Activated CD4-positive, alpha-beta T cell treated with anti-CD3 and anti-CD28 coated beads for 36 hours (primary cell): ENCODE measurements at regions of chr15 and their contacts with region 1.

Region 1: DNA sequence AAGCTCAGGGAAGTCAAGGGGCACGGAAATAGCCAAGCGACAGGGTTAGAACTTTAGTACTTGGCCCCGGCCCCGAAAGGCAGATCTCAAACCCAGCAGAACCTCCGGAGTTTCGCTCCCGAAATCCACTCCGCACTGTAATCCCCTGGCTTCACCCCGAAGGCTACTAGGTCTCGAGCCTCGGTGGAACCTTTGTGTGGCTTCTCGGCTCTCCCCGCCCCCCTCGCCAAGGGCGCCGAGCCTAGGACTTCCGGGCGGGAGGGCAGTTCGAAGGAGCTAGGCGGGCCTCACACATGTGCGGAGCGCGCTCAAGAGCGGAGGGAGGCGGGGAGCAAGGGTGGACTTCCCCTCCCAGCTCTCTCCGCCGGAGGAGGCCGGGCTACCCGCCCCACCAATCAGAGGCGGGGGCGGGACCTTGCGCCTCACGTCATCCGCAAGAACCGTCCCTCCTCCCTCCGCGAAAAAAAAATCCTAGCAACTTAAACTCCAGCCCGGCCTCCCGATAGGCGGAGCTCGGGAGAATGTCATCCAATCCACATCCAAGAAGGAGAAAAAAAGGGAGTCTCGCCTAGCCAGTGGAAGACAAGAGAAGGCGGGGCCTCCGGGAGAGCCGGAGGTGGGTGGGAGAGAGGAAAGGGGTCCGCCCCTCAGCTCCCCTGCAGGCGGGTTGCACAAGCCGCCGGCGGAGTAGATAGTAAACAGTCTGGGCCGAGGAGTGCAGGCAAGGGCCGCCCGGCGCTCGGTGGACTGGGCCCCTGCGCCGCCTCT is 2.4 kb upstream of the SIN3A start:
- DNase-seq: peak; percentile 98
- ATAC-seq: peak; percentile 40
- H3K4me3 Mint-ChIP-seq: peak overlapping the region; percentile 99
- H3K27ac Mint-ChIP-seq: peak overlapping the region; percentile 96
- H3K4me1 Mint-ChIP-seq: peaks cover 18% of the 10 kb centered on the region
- H3K27me3 Mint-ChIP-seq: no peaks in the 10 kb centered on the region

Region 2: GRCh38 chr15:74540761-74541493 is 913.0 kb before region 1 on chr15 and contains the start of gene ARID3B:
- CTCF ChIA-PET with region 1: no interaction called
- POLR2A ChIA-PET with region 1: interaction called, 3 read pairs
- intact Hi-C with region 1: loop called in 1 of 2 experiments (anchors 2 kb)
- DNase-seq: peak; percentile 99
- ATAC-seq: peak; percentile 88
- H3K4me3 Mint-ChIP-seq: peak within 1 kb of the TSS; percentile 94
- H3K27ac Mint-ChIP-seq: peak within 1 kb of the TSS; percentile 98
- H3K4me1 Mint-ChIP-seq: peaks cover 43% of the 10 kb centered on the region
- H3K27me3 Mint-ChIP-seq: peaks cover 2% of the 10 kb centered on the region
- total RNA-seq, gene ARID3B: 23.9 to 25.4 TPM

Region 3: GRCh38 chr15:74842581-74843444 is 611.1 kb before region 1 on chr15 and contains the start of gene ULK3:
- CTCF ChIA-PET with region 1: no interaction called
- POLR2A ChIA-PET with region 1: no interaction called
- intact Hi-C with region 1: loop called in 1 of 2 experiments (anchors 2 kb)
- DNase-seq: peak; percentile 97
- ATAC-seq: peak; percentile 85
- H3K4me3 Mint-ChIP-seq: peak within 1 kb of the TSS; percentile 90
- H3K27ac Mint-ChIP-seq: peak within 1 kb of the TSS; percentile 90
- H3K4me1 Mint-ChIP-seq: peaks cover 45% of the 10 kb centered on the region
- H3K27me3 Mint-ChIP-seq: no peaks in the 10 kb centered on the region
- total RNA-seq, gene ULK3: 40.3 to 45.2 TPM

Region 4: DNA sequence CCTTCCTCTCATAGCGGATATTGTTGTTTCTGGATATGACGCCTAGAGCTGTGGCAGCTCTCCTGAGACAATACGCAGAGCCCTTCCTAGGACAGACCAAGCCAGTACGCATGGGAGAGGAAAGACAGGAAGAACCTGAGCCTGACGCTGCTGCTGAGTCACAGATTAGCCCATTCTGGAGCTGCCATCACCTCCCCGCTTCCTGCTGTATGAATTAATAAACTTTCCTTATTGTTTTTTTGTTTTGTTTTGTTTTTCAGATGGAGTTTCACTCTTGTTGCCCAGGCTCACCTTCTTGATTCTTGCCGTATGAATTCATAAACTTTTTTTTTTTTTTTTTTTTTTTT is 363.5 kb before region 1 on chr15:
- CTCF ChIA-PET with region 1: no interaction called
- POLR2A ChIA-PET with region 1: interaction called, 3 read pairs
- intact Hi-C with region 1: loop called in 1 of 2 experiments (anchors 5 kb)
- DNase-seq: no peak
- ATAC-seq: no peak
- H3K4me3 Mint-ChIP-seq: no peak overlapping the region
- H3K27ac Mint-ChIP-seq: no peak overlapping the region
- H3K4me1 Mint-ChIP-seq: peaks cover 18% of the 10 kb centered on the region
- H3K27me3 Mint-ChIP-seq: peaks cover 11% of the 10 kb centered on the region

Region 5: GRCh38 chr15:75407083-75407482 is 46.8 kb before region 1 on chr15:
- CTCF ChIA-PET with region 1: interaction called, 3 read pairs
- POLR2A ChIA-PET with region 1: interaction called, 4 read pairs
- intact Hi-C with region 1: loop called in 1 of 2 experiments (anchors 5 kb)
- DNase-seq: no peak
- ATAC-seq: peak; percentile 56
- H3K4me3 Mint-ChIP-seq: no peak overlapping the region
- H3K27ac Mint-ChIP-seq: peak overlapping the region; percentile 68
- H3K4me1 Mint-ChIP-seq: peaks cover 34% of the 10 kb centered on the region
- H3K27me3 Mint-ChIP-seq: no peaks in the 10 kb centered on the region

Region 6: GRCh38 chr15:75738647-75739331 is 284.9 kb after region 1 on chr15:
- CTCF ChIA-PET with region 1: no interaction called
- POLR2A ChIA-PET with region 1: interaction called, 5 read pairs
- intact Hi-C with region 1: loop called in 1 of 2 experiments (anchors 1 kb)
- DNase-seq: peak; percentile 95
- ATAC-seq: peak; percentile 100
- H3K4me3 Mint-ChIP-seq: peak overlapping the region; percentile 76
- H3K27ac Mint-ChIP-seq: peak overlapping the region; percentile 23
- H3K4me1 Mint-ChIP-seq: peaks cover 8% of the 10 kb centered on the region
- H3K27me3 Mint-ChIP-seq: peaks cover 1% of the 10 kb centered on the region

Region 7: DNA sequence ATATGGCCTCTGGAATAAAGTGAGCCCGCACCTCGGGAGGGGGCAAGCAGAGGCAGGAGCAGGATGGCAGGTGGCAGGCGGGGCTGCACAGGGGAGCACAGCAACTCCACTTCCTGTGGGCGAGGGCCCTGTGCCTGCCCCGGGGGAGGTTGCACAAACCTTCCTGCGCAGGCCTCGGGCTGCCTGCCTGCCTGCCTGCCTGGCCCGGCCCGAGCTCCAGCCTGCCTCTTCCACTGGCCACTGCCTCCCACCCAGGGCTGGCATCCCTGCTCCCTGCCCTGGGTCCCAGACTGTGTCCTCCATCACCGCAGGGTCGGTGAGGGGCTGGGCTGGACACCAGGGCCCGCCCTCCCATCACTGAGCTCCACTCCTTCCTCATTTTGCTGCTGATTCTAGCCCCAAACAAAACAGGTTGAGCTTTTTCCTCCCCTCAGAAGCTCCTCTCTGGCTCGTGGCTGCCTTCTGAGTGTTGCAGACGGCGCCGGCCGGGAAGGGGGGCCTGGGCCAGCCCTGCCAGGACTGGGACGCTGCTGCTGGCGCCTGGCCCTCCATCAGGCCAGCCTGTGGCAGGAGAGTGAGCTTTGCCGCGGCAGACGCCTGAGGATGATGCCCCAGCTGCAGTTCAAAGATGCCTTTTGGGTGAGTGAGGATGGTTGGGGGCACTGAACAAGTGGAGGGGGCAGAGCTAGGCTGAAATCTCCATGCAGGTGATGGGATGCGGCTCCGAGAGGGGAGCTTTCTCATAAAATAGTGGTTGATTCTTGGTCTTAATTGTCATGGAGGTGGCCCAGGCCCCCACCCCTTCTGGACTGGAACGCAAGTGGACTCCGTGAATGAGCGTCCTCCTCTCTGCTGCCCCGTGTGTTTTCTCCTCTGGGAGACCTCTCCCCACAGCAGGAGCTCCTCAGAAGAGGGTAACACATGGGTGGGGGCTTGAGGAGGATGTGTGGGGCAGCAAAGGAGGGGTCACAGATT is 1541.4 kb after region 1 on chr15 and contains the start of gene PSTPIP1:
- CTCF ChIA-PET with region 1: no interaction called
- POLR2A ChIA-PET with region 1: no interaction called
- intact Hi-C with region 1: loop called in 1 of 2 experiments (anchors 10 kb)
- DNase-seq: peak; percentile 87
- ATAC-seq: peak; percentile 62
- H3K4me3 Mint-ChIP-seq: peak within 1 kb of the TSS; percentile 97
- H3K27ac Mint-ChIP-seq: peak within 1 kb of the TSS; percentile 96
- H3K4me1 Mint-ChIP-seq: peaks cover 57% of the 10 kb centered on the region
- H3K27me3 Mint-ChIP-seq: no peaks in the 10 kb centered on the region
- total RNA-seq, gene PSTPIP1: 100 to 125 TPM